GM12878 (cell line): ENCODE measurements at regions of chr12 and their contacts with region 1.

Region 1: DNA sequence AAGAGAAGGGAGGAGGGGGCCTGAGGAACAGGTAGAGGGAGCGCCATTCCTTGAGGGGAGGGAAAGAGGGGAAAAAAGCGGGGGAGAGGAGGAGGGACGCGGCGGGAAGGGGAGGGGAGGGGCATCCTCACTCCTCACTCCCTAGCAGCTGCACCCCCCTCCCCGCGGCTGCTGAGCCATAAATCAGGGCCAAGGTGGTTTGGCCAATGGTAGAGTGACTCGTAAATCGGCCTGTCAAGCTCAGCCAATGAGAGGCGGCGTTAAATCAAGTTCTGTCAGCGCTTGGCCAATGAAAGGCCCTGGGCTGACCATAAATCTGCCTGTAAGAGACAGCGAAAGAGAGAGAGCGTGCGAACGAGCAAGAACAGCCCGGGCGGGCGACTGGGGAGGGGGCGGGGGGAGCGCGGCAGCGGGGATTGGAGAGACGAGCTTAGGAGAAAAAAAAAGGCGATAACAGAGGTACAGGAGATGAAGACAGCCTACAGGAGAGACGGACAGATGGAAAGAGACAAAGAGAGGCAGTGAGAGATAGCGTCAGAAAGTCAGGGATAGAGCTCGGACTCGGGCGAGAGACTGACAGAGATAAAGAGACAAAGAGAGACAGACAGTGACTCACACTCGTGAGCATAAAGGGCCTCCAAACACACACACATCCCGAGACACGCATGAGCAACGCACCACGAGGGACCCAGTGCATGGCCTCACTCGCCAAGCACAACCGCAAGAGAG is 5.1 kb downstream of the GPR84 start:
- DNase-seq: peak; percentile 97
- ATAC-seq: peak; percentile 96
- H3K4me3 ChIP-seq: peak overlapping the region; percentile 84
- H3K27ac ChIP-seq: peak overlapping the region; percentile 92
- H3K4me1 ChIP-seq: peaks cover 23% of the 10 kb centered on the region
- H3K27me3 ChIP-seq: no peaks in the 10 kb centered on the region
- CTCF ChIP-seq: no peak
- EP300 ChIP-seq: peak in 1 of 2 experiments; percentile 55; a peak in 2 of 4 replicates
- POLR2A ChIP-seq: peak; percentile 63
- RAD21 ChIP-seq: no peak

Region 2: DNA sequence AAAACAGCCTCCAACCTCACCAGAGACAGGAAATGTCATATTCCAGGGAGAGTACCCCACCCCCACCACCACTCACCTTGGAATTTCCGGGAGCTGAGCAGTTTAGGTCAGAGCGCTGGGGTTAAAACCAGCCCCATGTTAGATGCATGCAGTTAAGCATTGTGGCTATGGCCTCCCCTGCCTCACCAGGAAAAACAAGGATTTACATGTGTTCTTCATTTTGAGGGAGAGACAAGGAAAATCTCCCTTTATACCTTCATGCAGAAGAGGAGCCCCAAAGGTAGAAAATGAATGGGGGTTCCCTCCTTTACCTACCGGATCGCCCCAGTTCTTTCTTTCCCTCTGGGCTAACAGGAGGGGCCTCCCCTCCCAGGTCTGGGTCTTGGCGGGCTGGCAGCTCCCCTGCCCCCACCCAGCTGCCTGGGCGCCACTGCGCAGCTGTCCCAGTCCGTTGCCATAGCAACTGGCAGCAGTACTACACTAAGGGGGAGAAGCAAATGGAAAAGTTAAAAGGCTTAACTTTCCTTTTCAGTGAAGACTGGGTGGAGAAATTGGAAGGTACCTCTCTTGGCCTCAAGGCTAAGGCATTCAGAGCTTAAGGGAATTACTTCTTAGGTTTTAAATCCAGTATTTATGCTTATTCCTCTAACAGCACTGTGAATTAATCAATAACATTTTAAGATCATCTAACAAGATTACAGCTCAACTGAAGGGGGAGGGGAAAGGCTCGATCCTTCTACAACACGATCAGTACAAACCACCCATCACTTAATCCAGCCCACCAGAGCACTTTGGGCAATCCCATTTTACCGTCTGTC is 99.8 kb before region 1 on chr12:
- CTCF ChIA-PET with region 1: interaction called, 4 read pairs
- POLR2A ChIA-PET with region 1: interaction called, 23 read pairs
- RAD21 ChIA-PET with region 1: interaction called, 11 read pairs
- SMC1A ChIA-PET with region 1: interaction called, 6 read pairs
- in situ Hi-C with region 1: no loop called
- intact Hi-C with region 1: no loop called
- DNase-seq: peak; percentile 42
- ATAC-seq: peak; percentile 97
- H3K4me3 ChIP-seq: peak overlapping the region; percentile 48
- H3K27ac ChIP-seq: peak overlapping the region; percentile 30
- H3K4me1 ChIP-seq: peaks cover 17% of the 10 kb centered on the region
- H3K27me3 ChIP-seq: no peaks in the 10 kb centered on the region
- CTCF ChIP-seq: no peak
- EP300 ChIP-seq: peak in 1 of 2 experiments; percentile 56; a peak in 1 of 4 replicates
- POLR2A ChIP-seq: no peak
- RAD21 ChIP-seq: no peak

Region 3: DNA sequence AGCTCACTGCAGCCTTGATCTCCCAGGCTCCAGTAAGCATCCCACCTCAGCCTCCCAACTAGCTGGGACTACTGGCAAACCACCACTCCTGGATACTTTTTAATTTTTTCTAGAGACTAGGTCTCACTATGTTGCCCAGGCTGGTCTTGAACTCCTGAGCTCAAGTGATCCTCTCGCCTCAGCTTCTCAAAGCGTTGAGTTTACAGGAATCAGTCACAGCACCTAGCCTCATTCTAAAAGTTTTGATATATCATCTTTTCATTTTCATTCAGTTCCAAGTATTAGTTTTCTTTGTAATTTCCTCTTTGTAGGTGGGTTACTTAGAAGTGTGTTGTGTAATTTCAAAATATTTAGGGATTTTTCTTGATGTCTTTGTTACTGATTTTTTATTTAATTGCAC is 88.9 kb before region 1 on chr12:
- CTCF ChIA-PET with region 1: no interaction called
- POLR2A ChIA-PET with region 1: no interaction called
- RAD21 ChIA-PET with region 1: no interaction called
- SMC1A ChIA-PET with region 1: no interaction called
- in situ Hi-C with region 1: no loop called
- intact Hi-C with region 1: no loop called
- DNase-seq: no peak
- ATAC-seq: no peak
- H3K4me3 ChIP-seq: no peak overlapping the region
- H3K27ac ChIP-seq: no peak overlapping the region
- H3K4me1 ChIP-seq: peaks cover 11% of the 10 kb centered on the region
- H3K27me3 ChIP-seq: no peaks in the 10 kb centered on the region
- CTCF ChIP-seq: no peak
- EP300 ChIP-seq: no peak
- POLR2A ChIP-seq: no peak
- RAD21 ChIP-seq: no peak

Region 4: GRCh38 chr12:54285150-54286041 is 73.8 kb before region 1 on chr12:
- CTCF ChIA-PET with region 1: interaction called, 116 read pairs
- POLR2A ChIA-PET with region 1: interaction called, 29 read pairs
- RAD21 ChIA-PET with region 1: interaction called, 11 read pairs
- SMC1A ChIA-PET with region 1: interaction called, 12 read pairs
- in situ Hi-C with region 1: no loop called
- intact Hi-C with region 1: no loop called
- DNase-seq: no peak
- ATAC-seq: no peak
- H3K4me3 ChIP-seq: peak overlapping the region; percentile 37; the same call in 1 of the 2 replicates
- H3K27ac ChIP-seq: no peak overlapping the region
- H3K4me1 ChIP-seq: peaks cover 3% of the 10 kb centered on the region; the same call in 1 of the 2 replicates
- H3K27me3 ChIP-seq: no peaks in the 10 kb centered on the region
- CTCF ChIP-seq: peak in 1 of 3 experiments; percentile 23; a peak in 3 of 6 replicates
- EP300 ChIP-seq: no peak
- POLR2A ChIP-seq: no peak
- RAD21 ChIP-seq: no peak

Region 5: DNA sequence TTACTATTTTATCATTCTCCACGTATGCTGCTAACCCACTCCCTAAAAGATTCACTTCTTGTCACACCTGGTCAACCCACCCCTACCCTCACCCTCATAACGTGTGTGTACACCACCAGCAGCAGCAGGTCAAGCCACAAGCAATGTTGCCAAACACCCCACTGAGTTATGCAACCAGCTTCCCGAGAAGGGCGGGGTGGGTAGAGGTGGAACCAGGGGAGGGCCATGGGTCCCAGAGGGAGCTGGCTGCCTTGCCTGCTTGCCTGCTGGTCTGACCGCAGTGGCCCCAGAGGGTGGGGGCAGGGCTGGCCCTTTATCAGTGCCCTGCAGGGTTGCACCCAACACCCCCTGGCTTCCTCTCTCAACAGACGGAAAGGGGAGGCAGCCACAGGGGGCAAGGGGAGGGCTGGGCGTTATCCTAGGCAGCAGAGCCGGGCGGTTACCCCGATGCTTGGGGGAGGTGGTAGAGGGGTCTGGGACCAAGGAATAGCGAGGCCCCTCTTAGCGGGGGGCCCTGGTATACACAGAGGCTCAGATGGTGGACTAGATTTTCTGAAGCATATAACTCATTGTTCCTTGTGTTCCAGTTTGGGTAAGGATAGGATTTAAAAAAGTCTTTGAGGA is 54.9 kb before region 1 on chr12:
- CTCF ChIA-PET with region 1: interaction called, 3 read pairs
- POLR2A ChIA-PET with region 1: no interaction called
- RAD21 ChIA-PET with region 1: no interaction called
- SMC1A ChIA-PET with region 1: no interaction called
- in situ Hi-C with region 1: loop called (anchors 5 kb)
- intact Hi-C with region 1: no loop called
- DNase-seq: no peak
- ATAC-seq: peak; percentile 81
- H3K4me3 ChIP-seq: no peak overlapping the region
- H3K27ac ChIP-seq: no peak overlapping the region
- H3K4me1 ChIP-seq: 0 out of 2 replicates have a peak, but pooled peaks cover 3% of the 10 kb centered on the region
- H3K27me3 ChIP-seq: peaks cover 14 to 25% of the 10 kb centered on the region in 2 experiments
- CTCF ChIP-seq: no peak
- EP300 ChIP-seq: no peak
- POLR2A ChIP-seq: no peak
- RAD21 ChIP-seq: no peak

Region 6: DNA sequence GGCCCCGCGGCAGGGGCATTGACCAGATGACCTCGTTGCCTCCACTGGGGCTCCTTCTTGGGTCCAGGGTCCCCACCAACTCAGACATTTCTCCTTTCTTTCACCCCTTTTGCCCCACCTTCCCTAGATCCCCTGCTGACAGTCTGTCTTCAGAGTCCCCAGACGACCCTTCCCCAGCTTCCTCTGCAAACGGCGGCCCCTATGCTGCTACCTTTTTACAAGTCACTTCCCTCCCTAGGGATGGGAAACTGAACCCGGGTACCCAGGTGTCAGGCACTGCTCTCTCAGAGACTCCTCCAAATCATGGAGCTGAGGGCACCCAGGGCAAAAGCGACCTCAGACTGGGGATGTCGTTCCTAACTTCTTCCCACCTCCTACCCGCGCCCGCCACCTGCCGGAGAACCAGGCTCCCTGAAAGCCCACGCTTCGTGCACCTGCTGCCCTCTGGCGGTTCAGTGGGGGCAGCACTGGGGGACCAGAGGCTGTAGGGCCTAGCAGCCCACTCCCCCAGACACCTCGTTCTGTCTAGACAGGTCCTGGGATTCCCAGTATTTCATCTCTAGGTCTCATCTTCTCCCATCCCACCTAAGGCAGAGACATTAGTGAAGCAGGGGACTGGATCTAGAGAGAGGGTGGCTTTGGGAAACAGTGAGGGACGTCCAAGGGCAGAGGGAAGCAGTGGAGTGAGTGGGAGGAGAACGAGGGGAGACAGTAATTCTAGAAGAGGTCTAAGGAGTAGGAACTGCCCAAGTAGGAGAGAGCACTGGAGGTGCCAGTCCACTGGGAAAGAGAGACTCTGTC is 20.4 kb after region 1 on chr12:
- CTCF ChIA-PET with region 1: interaction called, 66 read pairs
- POLR2A ChIA-PET with region 1: interaction called, 3 read pairs
- RAD21 ChIA-PET with region 1: interaction called, 5 read pairs
- SMC1A ChIA-PET with region 1: interaction called, 3 read pairs
- in situ Hi-C with region 1: no loop called
- intact Hi-C with region 1: no loop called
- DNase-seq: no peak
- ATAC-seq: peak; percentile 95
- H3K4me3 ChIP-seq: no peak overlapping the region
- H3K27ac ChIP-seq: no peak overlapping the region
- H3K4me1 ChIP-seq: peaks cover 4% of the 10 kb centered on the region
- H3K27me3 ChIP-seq: no peaks in the 10 kb centered on the region
- CTCF ChIP-seq: peak; percentile 100; a peak in 5 of 6 replicates
- EP300 ChIP-seq: no peak
- POLR2A ChIP-seq: no peak
- RAD21 ChIP-seq: peak; percentile 73